ENCODE measurements at regions of chr6 and their contacts with region 1.

Region 1: GRCh38 chr6:55239099-55239498 is 64.8 kb downstream of the HCRTR2 start:
- DNase-seq: no peak
- ATAC-seq: no peak
- H3K4me3 ChIP-seq: no peak overlapping the region
- H3K27ac ChIP-seq: no peak overlapping the region
- H3K4me1 ChIP-seq: no peaks in the 10 kb centered on the region
- H3K27me3 ChIP-seq: no peaks in the 10 kb centered on the region
- CTCF ChIP-seq: no peak
- POLR2A ChIP-seq: no peak

Region 2: GRCh38 chr6:53956068-53956711 is 1282.9 kb before region 1 on chr6:
- in situ Hi-C with region 1: loop called in 2 of 4 experiments (anchors 25 kb)
- intact Hi-C with region 1: no loop called
- DNase-seq: peak in 1 of 2 donors; percentile 23
- ATAC-seq: peak; percentile 47 to 74
- H3K4me3 ChIP-seq: no peak overlapping the region
- H3K27ac ChIP-seq: no peak overlapping the region
- H3K4me1 ChIP-seq: no peaks in the 10 kb centered on the region
- H3K27me3 ChIP-seq: no peaks in the 10 kb centered on the region
- CTCF ChIP-seq: peak in 3 of 5 experiments; percentile 30 to 42 (median 35)
- POLR2A ChIP-seq: no peak

Region 3: DNA sequence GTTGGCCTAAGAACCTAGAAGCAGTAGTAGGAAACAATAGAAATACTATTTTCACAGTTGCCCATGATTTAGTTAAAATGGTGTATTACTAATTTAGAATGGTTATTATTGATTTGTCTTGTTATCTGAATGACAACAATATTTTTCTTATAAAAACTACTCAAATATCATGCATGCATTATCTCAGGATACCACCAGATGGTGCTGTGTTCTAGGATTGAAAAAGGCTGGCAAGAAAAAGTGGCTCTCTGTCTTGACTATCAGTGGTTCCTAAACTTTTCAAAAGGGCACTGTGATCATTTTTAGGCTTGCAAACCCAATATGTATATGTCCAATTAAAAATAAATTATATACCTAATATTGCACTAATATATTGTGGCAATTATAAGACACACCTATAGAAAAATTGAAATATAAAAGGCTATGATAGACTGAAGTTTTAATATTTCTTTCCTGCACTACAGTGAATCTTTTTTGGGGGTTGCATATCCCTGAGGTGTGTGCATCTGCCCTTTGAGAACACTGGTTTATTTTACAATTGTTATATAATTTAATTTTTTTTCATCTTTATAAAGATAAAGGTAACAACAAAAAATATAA is 1259.5 kb before region 1 on chr6:
- in situ Hi-C with region 1: loop called (anchors 10 to 25 kb)
- intact Hi-C with region 1: loop called (anchors 5 kb)
- DNase-seq: no peak
- ATAC-seq: peak; percentile 38 to 43
- H3K4me3 ChIP-seq: no peak overlapping the region
- H3K27ac ChIP-seq: no peak overlapping the region
- H3K4me1 ChIP-seq: peaks cover 0 to under 1% of the 10 kb centered on the region in 2 donors
- H3K27me3 ChIP-seq: no peaks in the 10 kb centered on the region
- CTCF ChIP-seq: peak; percentile 78 to 85 (median 80)
- POLR2A ChIP-seq: no peak

Region 4: GRCh38 chr6:53986165-53986720 is 1252.9 kb before region 1 on chr6:
- in situ Hi-C with region 1: loop called in 2 of 4 experiments (anchors 10 to 25 kb)
- intact Hi-C with region 1: no loop called
- DNase-seq: peak in 1 of 2 donors; percentile 43
- ATAC-seq: peak; percentile 75
- H3K4me3 ChIP-seq: no peak overlapping the region
- H3K27ac ChIP-seq: peak overlapping the region; percentile 44 to 62 (median 56)
- H3K4me1 ChIP-seq: peaks cover 27 to 41% of the 10 kb centered on the region in 2 donors
- H3K27me3 ChIP-seq: no peaks in the 10 kb centered on the region
- CTCF ChIP-seq: peak; percentile 66 to 82 (median 79)
- POLR2A ChIP-seq: no peak

Region 5: GRCh38 chr6:54503144-54503543 is 736.0 kb before region 1 on chr6:
- in situ Hi-C with region 1: no loop called
- intact Hi-C with region 1: no loop called
- DNase-seq: no peak
- ATAC-seq: no peak
- H3K4me3 ChIP-seq: no peak overlapping the region
- H3K27ac ChIP-seq: no peak overlapping the region
- H3K4me1 ChIP-seq: no peaks in the 10 kb centered on the region
- H3K27me3 ChIP-seq: no peaks in the 10 kb centered on the region
- CTCF ChIP-seq: no peak
- POLR2A ChIP-seq: no peak

Region 6: DNA sequence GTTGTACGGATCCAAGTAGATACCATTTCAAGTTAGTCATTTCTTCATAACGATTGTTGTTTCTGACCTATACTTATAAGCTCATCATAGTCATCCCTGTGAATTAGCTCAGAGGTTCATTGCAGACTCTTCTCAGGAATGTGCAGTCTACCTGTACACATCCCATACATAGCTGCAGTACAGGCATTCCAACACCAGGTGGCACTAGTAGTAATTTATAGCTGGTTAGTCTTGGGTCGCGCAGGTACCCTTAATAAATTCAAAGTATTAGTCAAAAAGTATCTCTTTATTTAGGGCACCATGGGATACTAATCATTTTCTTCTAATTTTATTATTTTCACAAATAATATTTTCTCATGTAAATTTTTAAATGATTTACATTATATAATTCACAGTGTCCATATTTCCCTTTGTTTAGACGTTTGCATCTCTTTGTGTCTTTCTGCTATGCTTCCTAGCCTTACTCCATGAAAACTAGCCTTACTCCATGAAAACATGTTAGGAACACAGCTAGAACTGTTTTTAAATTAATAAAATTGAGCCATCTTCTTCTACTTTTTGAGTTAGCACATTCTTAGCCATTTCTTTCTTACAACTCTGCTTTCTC is 521.1 kb before region 1 on chr6:
- in situ Hi-C with region 1: loop called in 2 of 4 experiments (anchors 25 kb)
- intact Hi-C with region 1: loop called (anchors 10 kb)
- DNase-seq: peak in 1 of 2 donors; percentile 33
- ATAC-seq: peak in 1 of 2 donors; percentile 60
- H3K4me3 ChIP-seq: no peak overlapping the region
- H3K27ac ChIP-seq: no peak overlapping the region
- H3K4me1 ChIP-seq: no peaks in the 10 kb centered on the region
- H3K27me3 ChIP-seq: no peaks in the 10 kb centered on the region
- CTCF ChIP-seq: peak; percentile 62 to 78 (median 63)
- POLR2A ChIP-seq: no peak

Region 7: DNA sequence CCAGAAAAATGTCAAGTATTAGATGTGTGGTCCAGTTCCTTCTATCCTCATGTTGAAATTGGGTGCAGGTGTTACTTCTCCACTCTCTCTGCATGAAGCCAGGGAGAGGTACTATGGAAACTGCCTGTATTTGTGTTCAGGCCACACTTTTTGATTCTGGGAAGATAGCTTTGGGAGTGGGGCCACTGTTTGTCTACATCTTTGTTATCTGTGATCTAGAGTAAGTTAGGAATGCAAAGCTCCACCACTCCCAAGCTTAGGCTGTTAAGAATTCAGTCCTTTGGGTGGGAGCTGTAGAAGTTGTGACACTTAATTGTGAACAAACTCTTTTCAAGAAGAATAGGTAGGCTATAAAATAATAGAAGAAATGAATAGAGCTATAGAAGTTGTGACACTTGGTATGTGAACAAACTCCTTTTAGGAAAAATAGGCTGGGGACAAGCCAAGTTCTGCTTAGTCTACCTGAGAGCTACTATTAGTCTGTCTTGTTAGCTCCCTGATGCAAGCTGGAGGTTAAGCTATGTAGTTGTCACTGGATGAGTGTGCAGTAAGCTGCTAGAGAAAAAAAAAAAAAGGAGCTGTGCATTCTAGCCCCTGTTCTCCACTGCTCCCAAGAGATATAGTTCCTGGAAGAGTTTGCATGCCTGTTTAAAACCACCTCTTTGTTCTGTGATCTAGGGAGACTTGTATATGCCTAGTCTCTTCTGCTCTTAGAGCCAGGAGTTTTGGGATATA is 81.0 kb after region 1 on chr6:
- in situ Hi-C with region 1: no loop called
- intact Hi-C with region 1: no loop called
- DNase-seq: no peak
- ATAC-seq: no peak
- H3K4me3 ChIP-seq: no peak overlapping the region
- H3K27ac ChIP-seq: no peak overlapping the region
- H3K4me1 ChIP-seq: no peaks in the 10 kb centered on the region
- H3K27me3 ChIP-seq: no peaks in the 10 kb centered on the region
- CTCF ChIP-seq: no peak
- POLR2A ChIP-seq: no peak